CD4-positive, alpha-beta T cell (primary cell): ENCODE measurements at regions of chr1 and their contacts with region 1.

Region 1: DNA sequence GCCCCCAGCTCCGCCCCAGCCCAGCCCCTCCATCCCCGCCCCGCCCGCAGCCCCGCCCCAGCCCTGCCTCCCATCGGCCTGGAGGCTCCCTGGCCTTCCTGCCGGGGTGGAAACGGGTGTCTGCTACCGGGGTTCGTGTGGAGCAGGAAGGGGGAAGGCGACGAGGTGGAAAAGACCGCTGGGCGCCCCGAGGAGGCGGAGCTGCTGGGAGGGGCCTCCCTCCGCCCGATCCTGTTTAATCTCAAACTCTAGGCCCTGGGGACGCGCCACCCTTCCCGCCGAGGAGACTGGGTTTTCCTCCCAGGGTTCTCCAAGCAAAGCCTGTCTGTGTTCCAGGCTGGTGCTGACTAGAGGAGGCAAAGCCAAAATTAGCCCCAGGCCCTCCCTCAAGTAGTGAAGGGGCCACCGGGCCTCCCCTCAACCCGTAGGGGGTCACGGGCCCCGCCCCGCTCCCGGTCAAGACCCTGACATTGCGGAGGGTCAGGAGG is 16.2 kb upstream of the TTLL10 start:
- DNase-seq: peak; percentile 35 to 80 (median 53)
- ATAC-seq: peak; percentile 75
- H3K4me3 ChIP-seq: peak overlapping the region; percentile 87
- H3K4me3 Mint-ChIP-seq: peak overlapping the region; percentile 83
- H3K27ac ChIP-seq: peak overlapping the region; percentile 77 to 82
- H3K27ac Mint-ChIP-seq: peak overlapping the region; percentile 75
- H3K4me1 ChIP-seq: peaks cover 19% of the 10 kb centered on the region
- H3K4me1 Mint-ChIP-seq: no peaks in the 10 kb centered on the region
- H3K27me3 ChIP-seq: no peaks in the 10 kb centered on the region
- H3K27me3 Mint-ChIP-seq: no peaks in the 10 kb centered on the region
- CTCF ChIP-seq: no peak

Region 2: DNA sequence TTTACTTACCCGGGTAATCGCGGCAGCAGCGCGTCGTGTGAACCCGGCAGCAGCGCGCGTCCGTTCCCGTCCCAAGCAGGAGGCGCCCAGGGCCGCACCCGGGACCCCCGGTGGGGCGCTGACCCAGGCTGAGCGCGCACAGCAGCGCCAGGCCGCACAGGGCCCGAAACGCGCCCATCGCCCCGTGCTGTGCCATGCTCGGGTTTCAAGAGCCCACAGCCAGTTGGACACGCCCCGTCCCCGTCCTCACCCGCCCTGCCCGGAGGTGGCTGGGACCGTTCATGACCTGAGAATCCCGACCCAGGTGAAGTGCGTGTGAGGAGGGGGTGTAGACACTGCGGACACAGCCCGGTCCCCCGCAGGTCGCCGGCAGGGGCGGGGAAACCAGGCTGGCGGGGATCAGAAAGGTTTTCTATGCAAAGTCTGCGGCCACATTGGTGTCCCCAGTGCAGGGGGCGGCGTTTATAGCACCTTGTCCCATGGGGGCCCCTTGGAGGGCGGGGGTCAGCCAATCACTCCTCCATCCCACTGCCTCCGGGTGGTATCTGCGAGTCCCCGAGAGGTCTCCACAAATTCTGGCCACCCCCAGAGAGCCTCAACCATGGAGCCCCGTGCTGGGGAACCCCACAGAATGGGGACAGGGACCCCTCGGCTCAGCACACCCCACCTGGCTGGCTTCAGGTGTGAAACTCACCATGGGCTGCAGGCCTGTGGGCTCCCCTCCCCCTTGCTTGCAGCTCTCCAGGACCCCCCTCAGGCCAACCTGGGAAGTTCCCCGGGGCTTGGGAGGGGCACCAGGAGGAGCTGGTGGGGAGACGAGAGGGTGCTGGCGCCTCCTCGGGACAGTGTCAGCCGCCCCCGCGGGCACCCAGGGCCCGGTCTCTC is 49.1 kb after region 1 on chr1 and contains the start of gene TNFRSF18:
- CTCF ChIA-PET with region 1: no interaction called
- POLR2A ChIA-PET with region 1: interaction called, 4 read pairs
- intact Hi-C with region 1: loop called in 1 of 2 experiments (anchors 5 kb)
- DNase-seq: peak in 8 of 14 experiments; percentile 11 to 76 (median 53)
- ATAC-seq: no peak
- H3K4me3 ChIP-seq: peak within 1 kb of the TSS; percentile 61
- H3K4me3 Mint-ChIP-seq: peak within 1 kb of the TSS; percentile 69
- H3K27ac ChIP-seq: peak within 1 kb of the TSS in 1 of 2 donors; percentile 52
- H3K27ac Mint-ChIP-seq: no peak within 1 kb of the TSS
- H3K4me1 ChIP-seq: peaks cover 62% of the 10 kb centered on the region
- H3K4me1 Mint-ChIP-seq: peaks cover 19% of the 10 kb centered on the region
- H3K27me3 ChIP-seq: no peaks in the 10 kb centered on the region
- H3K27me3 Mint-ChIP-seq: no peaks in the 10 kb centered on the region
- CTCF ChIP-seq: no peak
- total RNA-seq, gene TNFRSF18: 14.8 to 17.8 TPM